ENCODE measurements at regions of chr15 and their contacts with region 1.

Region 1: GRCh38 chr15:101201406-101202174 is 50.3 kb downstream of the CHSY1 start:
- DNase-seq: peak; percentile 95 to 98
- H3K4me3 ChIP-seq: peak overlapping the region; percentile 31 to 41
- H3K27ac ChIP-seq: peak overlapping the region; percentile 70 to 89
- H3K4me1 ChIP-seq: peaks cover 18 to 57% of the 10 kb centered on the region in 2 donors
- H3K27me3 ChIP-seq: no peaks in the 10 kb centered on the region
- CTCF ChIP-seq: no peak

Region 2: GRCh38 chr15:101127506-101128076 is 74.0 kb before region 1 on chr15:
- intact Hi-C with region 1: loop called (anchors 5 kb)
- DNase-seq: peak; percentile 63 to 95
- H3K4me3 ChIP-seq: peak overlapping the region in 1 of 2 donors; percentile 32
- H3K27ac ChIP-seq: peak overlapping the region; percentile 93 to 94
- H3K4me1 ChIP-seq: peaks cover 14 to 27% of the 10 kb centered on the region in 2 donors
- H3K27me3 ChIP-seq: no peaks in the 10 kb centered on the region
- CTCF ChIP-seq: no peak

Region 3: DNA sequence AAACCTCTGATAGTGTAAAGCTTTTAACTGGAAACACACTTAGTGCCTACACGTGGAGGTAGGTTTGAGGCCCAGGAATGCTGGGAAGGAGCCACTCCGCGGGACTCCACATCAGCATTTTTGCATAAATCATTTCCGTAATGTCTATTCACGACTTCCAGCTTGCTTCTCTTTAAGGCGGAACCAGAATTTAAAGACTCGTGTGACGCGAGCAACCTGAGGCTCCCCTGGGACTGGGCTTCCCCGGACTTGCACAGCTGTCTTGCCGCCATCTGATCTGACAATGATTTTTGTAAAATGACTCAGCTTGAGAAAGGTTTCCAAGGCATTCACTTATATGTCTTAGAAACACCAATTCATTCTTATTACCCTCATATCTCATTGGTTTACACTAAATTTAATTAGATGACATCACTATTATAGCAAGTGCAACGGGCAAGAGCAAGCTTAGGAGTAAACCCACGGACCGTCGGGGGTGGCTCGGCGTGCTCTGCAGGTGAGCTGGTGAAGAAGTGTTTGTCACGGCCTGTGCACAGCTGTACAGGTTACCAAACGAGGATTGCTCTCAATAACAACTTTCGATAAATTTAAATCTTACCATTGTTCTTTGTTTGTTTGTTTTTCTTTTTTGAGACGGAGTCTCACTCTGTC is 45.0 kb before region 1 on chr15:
- intact Hi-C with region 1: no loop called
- DNase-seq: no peak
- H3K4me3 ChIP-seq: no peak overlapping the region
- H3K27ac ChIP-seq: no peak overlapping the region
- H3K4me1 ChIP-seq: no peaks in the 10 kb centered on the region
- H3K27me3 ChIP-seq: no peaks in the 10 kb centered on the region
- CTCF ChIP-seq: no peak

Region 4: GRCh38 chr15:101167753-101168463 is 33.7 kb before region 1 on chr15:
- intact Hi-C with region 1: loop called (anchors 2 kb)
- DNase-seq: peak; percentile 69 to 92
- H3K4me3 ChIP-seq: peak overlapping the region; percentile 13 to 37
- H3K27ac ChIP-seq: peak overlapping the region; percentile 94
- H3K4me1 ChIP-seq: peaks cover 23 to 36% of the 10 kb centered on the region in 2 donors
- H3K27me3 ChIP-seq: no peaks in the 10 kb centered on the region
- CTCF ChIP-seq: peak in 1 of 3 experiments; percentile 29

Region 5: GRCh38 chr15:101246824-101247745 is 45.5 kb after region 1 on chr15:
- intact Hi-C with region 1: loop called (anchors 2 kb)
- DNase-seq: peak in 1 of 2 donors; percentile 48
- H3K4me3 ChIP-seq: peak overlapping the region; percentile 28 to 37
- H3K27ac ChIP-seq: peak overlapping the region; percentile 52 to 71
- H3K4me1 ChIP-seq: peaks cover 20 to 73% of the 10 kb centered on the region in 2 donors
- H3K27me3 ChIP-seq: no peaks in the 10 kb centered on the region
- CTCF ChIP-seq: no peak